ENCODE measurements at regions of chr17 and their contacts with region 1.

Region 1: GRCh38 chr17:3683054-3683511 is 12.9 kb downstream of the P2RX5 start:
- DNase-seq: peak in 1 of 2 experiments; percentile 84
- H3K4me3 ChIP-seq: no peak overlapping the region
- H3K27ac ChIP-seq: no peak overlapping the region
- H3K4me1 ChIP-seq: peaks cover 0 to 3% (median under 1%) of the 10 kb centered on the region in 4 experiments; a peak in 3 of 7 replicates
- H3K27me3 ChIP-seq: no peaks in the 10 kb centered on the region
- CTCF ChIP-seq: peak; percentile 86 to 100 (median 97)
- EP300 ChIP-seq: no peak
- POLR2A ChIP-seq: no peak
- RAD21 ChIP-seq: peak; percentile 66 to 72

Region 2: GRCh38 chr17:3582915-3583314 is 100.2 kb before region 1 on chr17:
- CTCF ChIA-PET with region 1: no interaction called
- POLR2A ChIA-PET with region 1: no interaction called
- DNase-seq: no peak
- H3K4me3 ChIP-seq: no peak overlapping the region
- H3K27ac ChIP-seq: no peak overlapping the region
- H3K4me1 ChIP-seq: no peaks in the 10 kb centered on the region
- H3K27me3 ChIP-seq: no peaks in the 10 kb centered on the region
- CTCF ChIP-seq: no peak
- EP300 ChIP-seq: no peak
- POLR2A ChIP-seq: no peak
- RAD21 ChIP-seq: no peak

Region 3: GRCh38 chr17:3668279-3669085 is 14.6 kb before region 1 on chr17 and contains the starts of genes EMC6 and TAX1BP3:
- CTCF ChIA-PET with region 1: interaction called, 34 read pairs
- POLR2A ChIA-PET with region 1: interaction called, 17 read pairs
- DNase-seq: peak; percentile 95 to 100
- H3K4me3 ChIP-seq: peak within 1 kb of the TSS; percentile 79 to 94 (median 84)
- H3K27ac ChIP-seq: peak within 1 kb of the TSS; percentile 90
- H3K4me1 ChIP-seq: peaks cover 3 to 7% (median 5%) of the 10 kb centered on the region in 4 experiments
- H3K27me3 ChIP-seq: no peaks in the 10 kb centered on the region
- CTCF ChIP-seq: no peak
- EP300 ChIP-seq: no peak
- POLR2A ChIP-seq: peak; percentile 88 to 91
- RAD21 ChIP-seq: no peak
- total RNA-seq, gene EMC6: 81.5 and 86.5 TPM in 2 replicates
- total RNA-seq, gene TAX1BP3: 81.8 and 83.5 TPM in 2 replicates

Region 4: GRCh38 chr17:3695723-3696411 is 12.8 kb after region 1 on chr17 and contains the start of gene P2RX5:
- CTCF ChIA-PET with region 1: interaction called, 29 read pairs
- POLR2A ChIA-PET with region 1: interaction called, 3 read pairs
- DNase-seq: peak in 1 of 2 experiments; percentile 79
- H3K4me3 ChIP-seq: peak within 1 kb of the TSS; percentile 47 to 70 (median 61)
- H3K27ac ChIP-seq: no peak within 1 kb of the TSS
- H3K4me1 ChIP-seq: peaks cover 0 to 14% (median 8%) of the 10 kb centered on the region in 4 experiments; a peak in 5 of 7 replicates
- H3K27me3 ChIP-seq: peaks cover 0 to 22% (median 13%) of the 10 kb centered on the region in 4 experiments; a peak in 6 of 7 replicates
- CTCF ChIP-seq: no peak
- EP300 ChIP-seq: no peak
- POLR2A ChIP-seq: no peak
- RAD21 ChIP-seq: no peak
- total RNA-seq, gene P2RX5: 15.5 and 15.6 TPM in 2 replicates

Region 5: DNA sequence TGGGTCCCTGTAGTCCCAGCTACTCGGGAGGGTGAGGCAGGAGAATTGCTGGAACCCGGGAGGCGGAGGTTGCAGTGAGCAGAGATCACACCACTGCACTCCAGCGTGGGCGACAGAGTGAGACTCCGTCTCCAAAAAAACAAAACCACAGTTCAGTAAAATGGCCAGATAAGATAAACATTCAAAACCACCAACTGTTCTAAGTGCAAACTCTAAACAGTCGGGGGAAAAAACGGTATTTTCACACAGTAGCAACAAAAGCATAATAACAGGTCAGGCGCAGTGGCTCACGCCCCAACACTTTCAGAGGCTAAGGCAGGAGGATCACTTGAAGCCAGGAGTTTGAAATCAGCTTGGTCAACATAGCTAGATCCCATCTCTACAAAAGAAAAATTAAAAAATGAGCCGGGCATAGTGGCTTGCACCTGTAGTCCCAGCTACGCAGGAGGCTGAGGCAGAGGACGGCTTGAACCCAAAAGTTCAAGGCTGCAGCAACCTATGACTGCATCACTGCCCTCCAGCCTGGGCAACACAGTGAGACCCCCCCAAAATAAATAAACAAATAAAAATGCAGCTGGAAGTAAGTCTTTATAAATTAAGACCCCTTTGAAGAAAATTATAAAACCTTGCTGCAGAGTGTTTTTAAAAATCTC is 29.9 kb after region 1 on chr17:
- CTCF ChIA-PET with region 1: interaction called, 10 read pairs
- POLR2A ChIA-PET with region 1: no interaction called
- DNase-seq: no peak
- H3K4me3 ChIP-seq: no peak overlapping the region
- H3K27ac ChIP-seq: no peak overlapping the region
- H3K4me1 ChIP-seq: no peaks in the 10 kb centered on the region
- H3K27me3 ChIP-seq: no peaks in the 10 kb centered on the region
- CTCF ChIP-seq: no peak
- EP300 ChIP-seq: no peak
- POLR2A ChIP-seq: no peak
- RAD21 ChIP-seq: no peak

Region 6: GRCh38 chr17:3723556-3724369 is 40.7 kb after region 1 on chr17 and contains the start of gene HASPIN:
- CTCF ChIA-PET with region 1: interaction called, 13 read pairs
- POLR2A ChIA-PET with region 1: no interaction called
- DNase-seq: peak; percentile 70 to 95
- H3K4me3 ChIP-seq: peak within 1 kb of the TSS; percentile 67 to 84 (median 75)
- H3K27ac ChIP-seq: peak within 1 kb of the TSS; percentile 71
- H3K4me1 ChIP-seq: peaks cover 0 to 13% (median 8%) of the 10 kb centered on the region in 4 experiments; a peak in 4 of 7 replicates
- H3K27me3 ChIP-seq: no peaks in the 10 kb centered on the region
- CTCF ChIP-seq: peak in 2 of 3 experiments; percentile 4 to 17; a peak in 2 of 4 replicates
- EP300 ChIP-seq: no peak
- POLR2A ChIP-seq: peak; percentile 88 to 89
- RAD21 ChIP-seq: no peak
- total RNA-seq, gene HASPIN: 29.4 and 29.5 TPM in 2 replicates

Region 7: GRCh38 chr17:3732210-3732621 is 49.1 kb after region 1 on chr17:
- CTCF ChIA-PET with region 1: interaction called, 13 read pairs
- POLR2A ChIA-PET with region 1: no interaction called
- DNase-seq: no peak
- H3K4me3 ChIP-seq: no peak overlapping the region
- H3K27ac ChIP-seq: no peak overlapping the region
- H3K4me1 ChIP-seq: peaks cover 0 to 6% (median 0%) of the 10 kb centered on the region in 4 experiments; a peak in 2 of 7 replicates
- H3K27me3 ChIP-seq: no peaks in the 10 kb centered on the region
- CTCF ChIP-seq: no peak
- EP300 ChIP-seq: no peak
- POLR2A ChIP-seq: no peak
- RAD21 ChIP-seq: no peak; a peak in 1 of 4 replicates